OCI-LY7 (cell line): ENCODE measurements at regions of chr4 and their contacts with region 1.

Region 1: DNA sequence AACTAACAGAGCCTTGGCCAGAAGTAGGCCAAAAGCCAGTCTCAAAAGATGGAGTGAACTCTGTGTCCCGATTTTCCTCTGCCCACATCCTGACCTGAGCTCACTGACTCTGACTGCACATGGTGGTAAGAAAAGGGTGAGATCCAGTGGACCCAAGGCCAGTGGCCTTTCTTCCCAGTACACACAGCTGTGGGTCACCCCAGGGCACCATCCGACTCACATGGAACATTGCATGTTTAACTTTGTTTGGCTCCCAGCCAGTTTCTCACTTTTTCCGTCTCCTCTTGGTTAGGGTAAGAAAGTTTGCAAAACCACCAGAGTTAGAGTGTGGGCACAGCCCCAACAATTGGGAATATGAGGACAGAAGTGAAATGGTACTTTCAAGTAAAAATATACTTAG is 69.8 kb downstream of the GAB1 start:
- DNase-seq: no peak
- H3K4me3 ChIP-seq: no peak overlapping the region
- H3K27ac ChIP-seq: peak overlapping the region; percentile 97
- H3K4me1 ChIP-seq: peaks cover 99% of the 10 kb centered on the region
- CTCF ChIP-seq: no peak

Region 2: GRCh38 chr4:143335979-143336780 is 70.3 kb before region 1 on chr4:
- CTCF ChIA-PET with region 1: no interaction called
- POLR2A ChIA-PET with region 1: interaction called, 11 read pairs
- intact Hi-C with region 1: loop called (anchors 2 kb)
- DNase-seq: peak; percentile 74
- H3K4me3 ChIP-seq: peak overlapping the region; percentile 94
- H3K27ac ChIP-seq: peak overlapping the region; percentile 59
- H3K4me1 ChIP-seq: peaks cover 43% of the 10 kb centered on the region
- CTCF ChIP-seq: no peak

Region 3: GRCh38 chr4:143381171-143382118 is 25.1 kb before region 1 on chr4:
- CTCF ChIA-PET with region 1: interaction called, 9 read pairs
- POLR2A ChIA-PET with region 1: interaction called, 83 read pairs
- intact Hi-C with region 1: loop called (anchors 1 kb)
- DNase-seq: peak; percentile 80
- H3K4me3 ChIP-seq: peak overlapping the region; percentile 18
- H3K27ac ChIP-seq: peak overlapping the region; percentile 81
- H3K4me1 ChIP-seq: peaks cover 100% of the 10 kb centered on the region
- CTCF ChIP-seq: no peak

Region 4: DNA sequence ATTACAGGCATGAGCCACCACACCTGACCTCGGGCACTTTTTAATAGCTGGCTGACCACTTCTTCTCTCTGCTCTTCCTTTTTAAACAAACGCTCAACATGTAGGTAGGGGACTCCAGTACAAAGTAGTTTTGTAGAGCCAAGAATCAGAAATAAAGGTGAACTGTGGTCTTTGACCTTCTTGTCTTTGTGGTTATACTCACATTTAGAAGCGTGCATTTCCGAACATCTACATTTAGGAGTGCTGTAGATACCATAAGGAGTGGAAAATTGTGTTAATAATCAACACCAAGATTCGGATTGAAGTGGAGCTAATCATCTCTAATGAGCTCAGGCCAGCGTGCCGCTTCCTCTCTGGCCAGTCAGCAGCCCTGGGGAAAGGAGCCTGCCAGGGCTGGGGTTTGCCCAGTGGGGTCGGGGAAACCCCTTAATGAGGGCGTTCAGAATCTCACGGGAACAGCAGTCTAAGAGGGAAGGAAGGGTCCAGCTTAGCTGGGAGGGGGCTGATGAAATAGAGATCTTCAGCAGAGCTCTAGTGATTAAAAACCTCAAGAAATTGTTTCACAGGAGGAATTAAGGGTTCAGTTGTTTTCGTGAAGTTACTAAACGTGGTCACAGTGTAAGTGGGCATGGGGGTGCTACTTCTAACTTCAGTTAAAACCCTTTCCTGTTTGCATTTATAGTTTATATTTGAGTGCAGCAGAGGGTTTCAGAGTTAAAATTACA is 11.3 kb after region 1 on chr4:
- CTCF ChIA-PET with region 1: interaction called, 9 read pairs
- POLR2A ChIA-PET with region 1: interaction called, 104 read pairs
- intact Hi-C with region 1: loop called (anchors 1 kb)
- DNase-seq: peak; percentile 71
- H3K4me3 ChIP-seq: peak overlapping the region; percentile 50
- H3K27ac ChIP-seq: peak overlapping the region; percentile 98
- H3K4me1 ChIP-seq: peaks cover 85% of the 10 kb centered on the region
- CTCF ChIP-seq: no peak

Region 5: DNA sequence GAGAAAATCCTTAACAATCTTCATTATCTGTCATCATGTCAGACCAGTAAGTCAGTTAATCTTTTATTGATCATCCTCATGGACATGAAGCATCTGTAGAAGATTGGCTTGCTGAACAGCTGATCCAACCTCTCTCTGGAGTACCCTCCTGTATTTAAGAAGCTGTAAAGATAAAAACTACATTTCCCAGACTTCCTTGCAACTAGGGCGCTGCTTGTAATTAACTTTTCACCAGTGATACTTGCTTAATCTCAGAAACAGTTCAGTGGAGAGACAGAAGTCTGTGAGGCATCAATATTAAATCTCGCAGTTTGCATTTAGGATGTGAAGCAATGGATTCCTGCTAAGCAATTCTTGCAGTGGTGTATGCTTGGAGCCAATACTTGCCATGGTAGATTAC is 71.0 kb after region 1 on chr4:
- CTCF ChIA-PET with region 1: no interaction called
- POLR2A ChIA-PET with region 1: interaction called, 20 read pairs
- intact Hi-C with region 1: loop called (anchors 1 kb)
- DNase-seq: no peak
- H3K4me3 ChIP-seq: no peak overlapping the region
- H3K27ac ChIP-seq: no peak overlapping the region
- H3K4me1 ChIP-seq: peaks cover 29% of the 10 kb centered on the region
- CTCF ChIP-seq: no peak